ENCODE measurements at regions of chr3 and their contacts with region 1.

Region 1: GRCh38 chr3:127750226-127751031 is 71.9 kb downstream of the MGLL start:
- DNase-seq: no peak
- ATAC-seq: peak; percentile 51
- H3K4me3 Mint-ChIP-seq: no peak overlapping the region
- H3K27ac Mint-ChIP-seq: no peak overlapping the region
- H3K4me1 Mint-ChIP-seq: peaks cover 30% of the 10 kb centered on the region
- H3K27me3 Mint-ChIP-seq: peaks cover 19% of the 10 kb centered on the region

Region 2: DNA sequence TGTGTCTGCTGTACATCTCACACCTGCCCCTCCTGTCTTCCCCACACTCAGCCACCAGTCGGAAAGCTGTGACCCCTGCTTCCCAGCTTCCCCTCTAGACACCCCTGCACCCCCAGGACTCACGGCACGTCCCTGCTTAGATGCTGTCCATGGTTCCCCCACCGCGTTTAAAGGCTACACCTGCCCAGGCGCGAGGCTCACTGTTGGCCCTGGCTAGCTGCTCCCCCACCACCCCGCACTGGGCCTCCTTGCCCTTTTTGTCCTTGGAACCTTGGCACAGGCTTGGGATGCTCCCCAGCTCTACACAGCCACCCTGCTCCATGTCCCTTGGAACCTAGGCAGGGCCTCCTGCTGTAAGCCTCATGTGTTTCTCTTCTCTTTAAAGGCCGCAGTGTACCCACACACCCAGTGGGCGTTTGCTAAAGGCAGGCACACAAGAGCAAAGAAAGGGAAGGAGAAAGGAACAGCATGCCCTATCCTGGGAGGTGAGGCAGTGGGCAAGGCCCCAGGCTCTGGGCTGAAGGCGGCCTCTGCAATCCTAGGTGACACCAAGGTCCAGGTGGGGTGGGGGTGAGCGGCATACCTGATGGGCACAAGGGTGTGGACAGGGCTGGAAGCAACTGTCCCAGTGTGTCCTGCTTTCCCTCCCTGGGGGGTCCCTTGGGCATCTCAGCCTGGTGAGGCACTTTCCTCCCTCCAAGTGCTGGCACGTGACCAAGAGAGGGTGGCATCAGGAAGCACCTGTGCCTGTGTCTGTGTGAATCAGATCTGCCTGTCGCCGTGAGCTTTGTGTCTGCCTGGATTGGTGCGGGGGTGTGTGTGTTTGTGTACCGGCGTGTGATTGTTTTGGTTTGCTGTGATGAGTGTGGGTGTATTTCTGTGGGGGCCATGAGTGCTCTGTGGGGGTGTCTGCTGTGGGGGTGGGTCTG is 214.3 kb before region 1 on chr3:
- CTCF ChIA-PET with region 1: no interaction called
- DNase-seq: no peak
- ATAC-seq: no peak
- H3K4me3 Mint-ChIP-seq: no peak overlapping the region
- H3K27ac Mint-ChIP-seq: no peak overlapping the region
- H3K4me1 Mint-ChIP-seq: no peaks in the 10 kb centered on the region
- H3K27me3 Mint-ChIP-seq: peaks cover 24% of the 10 kb centered on the region

Region 3: DNA sequence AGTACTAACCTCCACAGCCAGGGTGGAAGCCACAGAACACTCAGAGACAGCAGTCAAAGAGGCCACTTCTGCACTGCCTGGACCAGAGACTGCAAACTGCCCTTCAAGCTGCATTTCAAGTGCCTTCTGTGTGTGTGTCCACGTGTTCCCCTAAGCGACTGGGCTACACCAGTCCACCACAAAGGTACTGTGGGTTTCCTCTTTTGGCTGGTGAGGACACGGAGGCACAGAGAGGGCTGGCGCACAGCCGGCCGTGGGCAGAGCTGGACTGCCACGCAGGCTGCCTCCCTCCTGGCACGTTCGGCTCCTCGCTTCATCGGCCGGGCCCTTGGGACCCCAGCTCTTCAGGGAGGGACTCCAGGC is 11.0 kb after region 1 on chr3:
- CTCF ChIA-PET with region 1: interaction called, 16 read pairs
- DNase-seq: peak; percentile 62
- ATAC-seq: peak; percentile 45
- H3K4me3 Mint-ChIP-seq: peak overlapping the region; percentile 68
- H3K27ac Mint-ChIP-seq: peak overlapping the region; percentile 86
- H3K4me1 Mint-ChIP-seq: peaks cover 57% of the 10 kb centered on the region
- H3K27me3 Mint-ChIP-seq: no peaks in the 10 kb centered on the region

Region 4: GRCh38 chr3:127775398-127776109 is 25.1 kb after region 1 on chr3:
- CTCF ChIA-PET with region 1: no interaction called
- DNase-seq: no peak
- ATAC-seq: no peak
- H3K4me3 Mint-ChIP-seq: no peak overlapping the region
- H3K27ac Mint-ChIP-seq: no peak overlapping the region
- H3K4me1 Mint-ChIP-seq: peaks cover 16% of the 10 kb centered on the region
- H3K27me3 Mint-ChIP-seq: no peaks in the 10 kb centered on the region

Region 5: GRCh38 chr3:127889461-127889863 is 139.0 kb after region 1 on chr3:
- CTCF ChIA-PET with region 1: no interaction called
- DNase-seq: no peak
- ATAC-seq: no peak
- H3K4me3 Mint-ChIP-seq: no peak overlapping the region
- H3K27ac Mint-ChIP-seq: no peak overlapping the region
- H3K4me1 Mint-ChIP-seq: peaks cover 9% of the 10 kb centered on the region
- H3K27me3 Mint-ChIP-seq: peaks cover 4% of the 10 kb centered on the region